GM10248 (cell line): ENCODE measurements at regions of chr12 and their contacts with region 1.

Region 1: GRCh38 chr12:120228291-120229070 is 27.6 kb upstream of the RPLP0 start:
- DNase-seq: peak; percentile 92
- CTCF ChIP-seq: peak; percentile 97

Region 2: DNA sequence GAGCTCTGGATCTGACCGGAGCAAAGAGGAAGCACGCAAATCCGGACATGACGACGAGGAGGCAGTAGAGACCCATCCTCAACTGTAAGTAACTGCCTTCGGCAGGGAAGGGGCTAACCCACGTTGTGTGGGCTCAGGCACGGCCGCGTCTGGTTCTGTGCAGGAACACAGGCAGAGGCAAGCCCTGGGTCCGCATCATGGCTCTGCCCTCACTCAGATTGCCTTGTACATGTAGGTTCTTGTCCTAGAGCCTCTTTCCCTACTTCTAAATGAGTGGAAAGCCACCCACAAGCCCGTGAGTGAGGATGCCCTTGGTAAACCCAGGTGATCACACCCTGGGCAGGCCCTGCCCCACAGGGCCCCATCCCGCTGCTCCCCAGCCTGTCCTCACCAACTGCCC is 18.6 kb before region 1 on chr12:
- CTCF ChIA-PET with region 1: interaction called, 14 read pairs
- POLR2A ChIA-PET with region 1: no interaction called
- DNase-seq: no peak
- CTCF ChIP-seq: no peak

Region 3: GRCh38 chr12:120249875-120250795 is 21.7 kb after region 1 on chr12:
- CTCF ChIA-PET with region 1: interaction called, 271 read pairs
- POLR2A ChIA-PET with region 1: no interaction called
- DNase-seq: peak; percentile 54
- CTCF ChIP-seq: no peak

Region 4: DNA sequence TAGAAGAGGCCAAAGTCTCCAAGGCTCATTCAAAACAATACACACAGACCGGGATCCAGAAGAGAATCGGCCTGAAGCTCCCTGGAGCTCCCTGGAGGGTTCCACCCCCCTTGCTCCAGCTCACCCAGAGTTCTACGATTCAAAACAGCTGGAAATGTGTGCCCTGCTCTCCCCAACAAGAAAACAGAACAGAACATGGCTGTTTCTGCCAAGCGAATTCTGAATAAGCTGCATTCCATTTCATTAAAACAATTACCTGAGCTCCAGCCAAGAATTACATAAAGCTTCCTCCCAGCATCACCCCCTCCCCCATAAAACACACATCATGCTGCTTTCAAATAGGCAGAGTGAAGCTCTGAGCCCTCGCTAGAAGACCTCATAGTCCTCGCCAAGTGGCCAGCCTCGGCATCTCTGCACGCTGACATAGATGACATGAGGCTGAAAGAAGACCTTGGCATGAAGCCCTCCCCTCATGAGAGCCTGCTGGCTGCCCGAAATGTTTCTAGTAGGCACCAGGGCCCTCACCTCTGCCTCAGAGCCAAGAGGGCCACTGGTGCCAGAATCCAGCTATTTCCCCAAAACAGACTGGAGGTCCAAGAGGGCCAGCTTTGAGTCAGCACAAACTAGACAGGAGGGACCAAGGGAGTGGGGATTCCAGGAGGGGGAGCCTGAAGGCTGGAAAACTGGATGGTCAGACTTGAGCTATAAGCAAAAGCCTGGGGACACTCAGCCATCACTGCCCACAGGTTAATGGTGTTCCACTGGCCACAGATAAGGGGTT is 28.8 kb after region 1 on chr12:
- CTCF ChIA-PET with region 1: interaction called, 375 read pairs
- POLR2A ChIA-PET with region 1: interaction called, 3 read pairs
- DNase-seq: no peak
- CTCF ChIP-seq: no peak

Region 5: GRCh38 chr12:120265473-120266179 is 37.1 kb after region 1 on chr12 and contains the start of gene PXN:
- CTCF ChIA-PET with region 1: interaction called, 375 read pairs
- POLR2A ChIA-PET with region 1: interaction called, 4 read pairs
- DNase-seq: peak; percentile 96
- CTCF ChIP-seq: peak; percentile 78

Region 6: GRCh38 chr12:120286796-120287465 is 58.5 kb after region 1 on chr12:
- CTCF ChIA-PET with region 1: interaction called, 53 read pairs
- POLR2A ChIA-PET with region 1: interaction called, 52 read pairs
- DNase-seq: no peak
- CTCF ChIP-seq: no peak

Region 7: DNA sequence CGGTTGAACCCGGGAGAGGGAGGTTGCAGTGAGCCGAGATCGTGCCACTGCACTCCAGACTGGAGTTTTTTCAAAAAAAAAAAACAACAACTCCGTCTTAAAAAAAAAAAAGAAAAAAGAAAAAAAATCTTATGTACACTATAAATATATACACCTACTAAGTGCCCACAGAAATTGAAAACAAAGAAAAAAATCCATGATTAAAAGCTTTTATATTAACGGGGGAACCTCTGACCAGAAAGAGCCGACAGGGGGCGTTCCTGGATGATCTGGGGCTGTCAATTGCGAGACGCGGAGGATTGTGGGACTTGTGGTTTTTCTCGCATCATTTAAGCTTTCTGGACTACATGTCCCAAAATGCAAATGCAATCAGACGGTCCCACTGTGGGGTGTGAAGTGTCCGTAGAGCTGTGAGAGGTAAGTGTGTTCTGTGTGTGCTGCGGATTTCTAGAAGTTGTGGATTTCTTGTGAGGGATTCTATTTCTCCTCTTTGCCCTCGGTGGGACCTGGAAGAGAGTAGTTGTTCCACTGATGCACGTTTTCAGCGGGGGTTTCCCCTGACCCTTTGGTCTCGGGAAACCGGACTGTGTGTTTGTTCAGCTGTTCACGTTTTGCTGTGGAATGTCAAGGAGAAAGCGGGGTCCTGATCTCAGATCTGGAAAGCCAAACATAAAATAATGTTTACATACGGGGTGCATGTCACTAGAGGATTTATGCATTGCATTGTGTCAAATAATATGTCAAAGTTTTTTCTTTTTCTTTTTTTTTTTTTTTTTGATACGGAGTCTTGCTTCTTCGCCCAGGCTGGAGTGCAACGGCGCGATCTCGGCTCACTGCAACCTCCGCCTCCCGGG is 73.7 kb after region 1 on chr12 and contains the start of gene SIRT4:
- CTCF ChIA-PET with region 1: interaction called, 13 read pairs
- POLR2A ChIA-PET with region 1: no interaction called
- DNase-seq: peak; percentile 93
- CTCF ChIP-seq: peak; percentile 72